Posterior vena cava (tissue), 2 donors: ENCODE measurements at regions of chr11 and their contacts with region 1.

Region 1: DNA sequence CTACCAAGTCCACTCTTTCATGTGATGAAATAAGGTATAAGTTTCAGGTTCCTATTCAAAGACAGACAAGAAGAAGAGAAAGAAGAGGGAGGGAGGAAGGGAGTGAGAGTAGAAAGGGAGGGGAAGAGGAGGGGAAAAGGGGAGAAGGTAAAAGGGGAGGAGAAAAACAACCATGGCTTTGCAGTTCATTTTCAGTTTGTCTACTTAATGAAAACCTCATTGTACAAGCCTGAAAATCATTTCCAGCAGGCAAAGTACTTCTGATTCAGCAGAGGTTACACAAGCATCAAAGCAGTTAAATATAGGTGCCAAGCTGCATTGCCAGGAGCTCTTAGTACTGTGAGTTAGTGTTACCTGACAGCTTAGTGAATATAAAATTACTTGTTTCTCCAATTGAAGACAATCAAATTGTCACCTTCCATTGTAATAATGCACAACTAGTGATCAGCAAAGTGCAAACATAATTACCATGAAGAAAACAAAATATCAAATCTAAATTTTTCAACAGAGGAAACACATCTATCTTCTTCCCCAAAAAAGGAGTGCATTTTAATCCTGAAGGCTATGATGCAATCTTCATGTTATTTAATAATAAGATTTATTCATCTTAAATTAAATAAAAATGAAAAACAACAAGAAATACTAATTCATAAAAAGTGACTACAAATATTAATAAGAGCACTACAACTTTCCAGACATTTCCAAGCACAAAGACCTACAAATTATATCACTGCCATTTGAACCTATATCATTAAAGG is 8.2 kb downstream of the SOX6 start:
- DNase-seq: no peak

Region 2: DNA sequence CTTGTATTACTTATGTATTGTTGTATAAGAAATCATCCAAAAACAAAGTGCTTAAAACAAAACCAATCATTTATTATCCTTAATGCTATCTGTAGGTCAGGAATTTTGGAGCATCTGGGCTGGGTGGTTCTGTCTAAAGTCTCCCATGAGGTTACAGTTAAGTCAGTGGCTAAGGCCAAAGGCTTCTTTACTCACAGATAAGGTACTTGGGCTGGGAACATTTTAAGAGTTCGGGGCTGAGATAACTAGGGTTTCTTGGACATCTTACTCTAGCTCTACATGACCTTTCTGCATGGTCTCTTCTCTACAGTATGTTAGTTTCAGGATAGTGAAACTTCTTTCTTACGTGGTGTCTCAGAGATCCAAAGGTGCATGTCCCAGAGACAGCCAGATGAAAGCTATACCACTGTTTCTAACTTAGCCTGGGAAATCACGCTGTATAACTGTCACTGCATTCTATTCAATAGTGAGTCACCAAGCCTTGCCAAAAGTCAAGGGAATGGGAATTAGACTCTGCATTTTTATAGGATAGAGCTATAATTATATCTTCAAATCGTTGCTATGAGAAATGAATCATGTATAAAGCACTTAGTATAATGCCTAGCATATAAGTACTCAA is 21.3 kb before region 1 on chr11:
- intact Hi-C with region 1: loop called in 1 of 2 experiments (anchors 2 kb)
- DNase-seq: no peak

Region 3: DNA sequence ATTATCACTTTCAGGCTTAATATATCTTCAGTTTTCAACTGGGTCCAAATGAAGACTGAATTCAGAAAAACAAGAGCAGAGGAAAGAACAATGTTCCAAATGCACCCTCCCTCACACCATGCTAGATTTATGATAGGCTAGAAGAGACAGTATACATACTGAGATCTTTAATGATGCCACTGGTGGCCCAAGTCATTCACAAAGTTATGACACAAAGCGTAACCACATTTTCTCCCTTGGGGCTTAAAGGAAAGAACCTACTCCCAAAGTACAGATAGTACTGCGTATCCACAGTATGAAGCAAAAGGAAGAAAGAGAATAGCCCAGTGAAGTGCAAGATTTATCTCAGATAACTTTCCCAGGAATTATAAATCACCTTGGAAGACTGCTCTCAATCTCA is 19.1 kb after region 1 on chr11:
- intact Hi-C with region 1: no loop called
- DNase-seq: no peak